HCT116 (cell line): ENCODE measurements at regions of chr17 and their contacts with region 1.

Region 1: GRCh38 chr17:4143563-4144421 is 795 bp downstream of the CYB5D2 start:
- DNase-seq: peak; percentile 87
- ATAC-seq: peak; percentile 80
- H3K4me3 ChIP-seq: peak overlapping the region; percentile 92 to 96
- H3K27ac ChIP-seq: peak overlapping the region; percentile 96
- H3K4me1 ChIP-seq: peaks cover 7 to 17% of the 10 kb centered on the region in 2 experiments; a peak in 2 of 4 replicates
- H3K27me3 ChIP-seq: no peaks in the 10 kb centered on the region
- CTCF ChIP-seq: no peak
- POLR2A ChIP-seq: peak; percentile 81
- RAD21 ChIP-seq: no peak

Region 2: DNA sequence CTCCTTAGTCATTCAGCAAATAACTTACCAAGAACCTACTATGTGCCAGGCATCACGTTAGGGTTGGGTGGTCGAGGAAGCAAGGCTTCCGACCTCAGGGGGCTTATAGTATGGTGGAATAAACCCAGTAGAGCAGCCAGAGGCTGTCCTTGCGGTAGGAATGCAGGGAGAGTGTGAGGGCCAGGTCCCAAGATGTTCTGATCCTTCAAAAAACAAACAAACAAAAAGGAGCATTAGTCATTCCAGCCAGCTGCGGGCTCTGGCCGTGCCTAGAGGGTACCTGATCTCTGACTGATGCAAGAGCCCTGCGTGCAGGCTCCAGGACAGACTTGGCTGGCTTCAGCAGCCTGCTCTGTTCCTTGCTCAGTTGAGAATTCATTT is 17.4 kb after region 1 on chr17:
- CTCF ChIA-PET with region 1: no interaction called
- POLR2A ChIA-PET with region 1: interaction called, 13 read pairs
- RAD21 ChIA-PET with region 1: no interaction called
- intact Hi-C with region 1: no loop called
- DNase-seq: no peak
- ATAC-seq: peak; percentile 49; the same call in 1 of the 2 replicates
- H3K4me3 ChIP-seq: no peak overlapping the region
- H3K27ac ChIP-seq: 0 out of 2 replicates have a peak overlapping the region, but pooled peaks have one; percentile 16
- H3K4me1 ChIP-seq: peaks cover 7 to 13% of the 10 kb centered on the region in 2 experiments; a peak in 3 of 4 replicates
- H3K27me3 ChIP-seq: no peaks in the 10 kb centered on the region
- CTCF ChIP-seq: no peak
- POLR2A ChIP-seq: no peak
- RAD21 ChIP-seq: no peak

Region 3: DNA sequence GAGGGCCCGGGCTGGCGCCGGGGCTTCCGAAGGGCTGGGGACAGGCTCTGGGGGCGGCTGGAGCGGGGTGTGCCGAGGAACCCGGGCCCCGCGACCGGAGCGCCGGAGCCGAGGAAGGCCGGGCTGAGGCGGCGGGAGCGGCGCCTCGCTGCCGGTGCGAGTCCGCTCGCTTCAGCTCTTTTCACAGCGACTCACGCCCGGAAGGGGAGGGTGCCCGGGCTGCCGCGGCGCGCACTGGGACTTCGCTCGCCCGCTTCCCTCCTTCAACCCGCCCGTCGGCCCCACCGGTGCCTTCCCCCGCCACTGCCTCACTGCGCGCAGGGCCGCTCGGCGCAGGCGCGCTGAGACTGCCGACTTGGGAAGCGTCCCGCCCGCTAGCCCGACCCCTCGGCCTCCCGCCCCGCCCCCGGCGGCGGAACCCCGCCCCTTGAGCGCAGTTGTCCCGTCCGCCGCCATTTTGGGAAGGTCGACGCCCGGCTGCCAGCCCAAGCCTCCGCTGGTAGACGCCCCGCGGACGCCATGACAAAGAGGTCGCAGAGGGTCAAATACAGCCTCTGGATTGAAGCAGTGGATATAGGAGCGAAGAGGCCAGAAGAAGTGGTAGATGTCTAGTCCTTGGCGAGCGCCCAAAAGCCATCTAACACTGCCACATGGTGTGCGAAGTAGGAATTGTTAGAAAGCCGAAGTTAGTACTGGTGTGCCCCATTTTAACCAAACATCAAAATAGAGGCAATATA is 222.7 kb after region 1 on chr17 and contains the start of gene UBE2G1:
- CTCF ChIA-PET with region 1: no interaction called
- POLR2A ChIA-PET with region 1: no interaction called
- RAD21 ChIA-PET with region 1: no interaction called
- intact Hi-C with region 1: loop called (anchors 5 kb)
- DNase-seq: peak; percentile 93
- ATAC-seq: peak; percentile 84
- H3K4me3 ChIP-seq: peak within 1 kb of the TSS; percentile 67 to 89
- H3K27ac ChIP-seq: peak within 1 kb of the TSS; percentile 95
- H3K4me1 ChIP-seq: peaks cover 11 to 15% of the 10 kb centered on the region in 2 experiments; a peak in 3 of 4 replicates
- H3K27me3 ChIP-seq: no peaks in the 10 kb centered on the region
- CTCF ChIP-seq: peak; percentile 20 to 52 (median 38); a peak in 3 of 6 replicates
- POLR2A ChIP-seq: peak; percentile 49
- RAD21 ChIP-seq: peak; percentile 78
- total RNA-seq, gene UBE2G1: 80.6 TPM

Region 4: DNA sequence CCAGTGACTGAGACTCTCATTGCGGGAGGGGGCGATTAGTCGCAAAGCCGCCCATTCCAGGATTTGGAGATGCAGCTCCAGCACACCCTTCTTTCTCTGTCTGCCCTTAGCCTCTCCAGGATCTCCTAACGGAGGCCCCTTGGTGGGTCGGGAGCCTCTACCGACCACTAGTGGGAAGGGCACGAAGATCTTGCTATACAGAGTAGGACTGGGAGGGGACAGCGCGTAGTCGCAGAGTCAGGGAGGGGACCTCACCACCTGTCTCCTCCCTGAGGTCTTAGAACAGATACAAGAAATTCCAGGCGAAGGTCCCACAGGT is 439.9 kb after region 1 on chr17:
- CTCF ChIA-PET with region 1: no interaction called
- POLR2A ChIA-PET with region 1: no interaction called
- RAD21 ChIA-PET with region 1: no interaction called
- intact Hi-C with region 1: no loop called
- DNase-seq: peak; percentile 31
- ATAC-seq: peak; percentile 83
- H3K4me3 ChIP-seq: peak overlapping the region; percentile 51 to 65
- H3K27ac ChIP-seq: peak overlapping the region; percentile 46; the same call in 1 of the 2 replicates
- H3K4me1 ChIP-seq: peaks cover 5 to 23% of the 10 kb centered on the region in 2 experiments; a peak in 3 of 4 replicates
- H3K27me3 ChIP-seq: peaks cover 5% of the 10 kb centered on the region; the same call in 1 of the 2 replicates
- CTCF ChIP-seq: peak in 2 of 3 experiments; percentile 50 to 55; a peak in 4 of 6 replicates
- POLR2A ChIP-seq: no peak
- RAD21 ChIP-seq: no peak